AG04450 (cell line): ENCODE measurements at regions of chr6 and their contacts with region 1.

Region 1: GRCh38 chr6:33585403-33586107 is 5.5 kb upstream of the BAK1 start:
- DNase-seq: no peak
- H3K4me3 ChIP-seq: peak overlapping the region; percentile 20; the same call in 1 of the 2 replicates
- H3K27ac ChIP-seq: no peak overlapping the region
- H3K27me3 ChIP-seq: no peaks in the 10 kb centered on the region
- CTCF ChIP-seq: peak; percentile 95

Region 2: DNA sequence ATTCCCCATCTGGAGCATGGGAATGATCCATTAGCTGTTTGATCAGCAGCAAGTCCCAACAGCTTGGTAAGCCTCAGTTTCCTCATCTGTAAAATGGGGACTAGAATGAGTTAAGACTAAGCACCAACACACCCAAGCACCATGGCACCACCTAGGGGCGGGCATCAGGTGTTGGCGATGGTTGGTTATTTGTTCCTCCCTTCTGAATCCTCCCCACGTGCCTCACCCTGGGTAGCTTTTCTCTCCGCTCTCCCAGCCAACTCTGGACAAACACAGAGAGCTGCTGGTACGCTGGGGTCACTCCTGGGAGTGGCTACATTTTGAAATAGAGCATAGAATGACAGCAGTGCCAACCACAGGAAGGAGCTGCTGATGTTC is 22.2 kb after region 1 on chr6:
- CTCF ChIA-PET with region 1: interaction called, 10 read pairs
- POLR2A ChIA-PET with region 1: no interaction called
- DNase-seq: no peak
- H3K4me3 ChIP-seq: no peak overlapping the region
- H3K27ac ChIP-seq: no peak overlapping the region
- H3K27me3 ChIP-seq: no peaks in the 10 kb centered on the region
- CTCF ChIP-seq: 0 out of 2 replicates have a peak, but pooled peaks have one; percentile 2

Region 3: GRCh38 chr6:33652002-33652401 is 66.4 kb after region 1 on chr6:
- CTCF ChIA-PET with region 1: interaction called, 13 read pairs
- POLR2A ChIA-PET with region 1: no interaction called
- DNase-seq: no peak
- H3K4me3 ChIP-seq: no peak overlapping the region
- H3K27ac ChIP-seq: no peak overlapping the region
- H3K27me3 ChIP-seq: no peaks in the 10 kb centered on the region
- CTCF ChIP-seq: no peak

Region 4: GRCh38 chr6:33700391-33701050 is 115.0 kb after region 1 on chr6:
- CTCF ChIA-PET with region 1: interaction called, 38 read pairs
- POLR2A ChIA-PET with region 1: no interaction called
- DNase-seq: peak; percentile 26
- H3K4me3 ChIP-seq: no peak overlapping the region
- H3K27ac ChIP-seq: no peak overlapping the region
- H3K27me3 ChIP-seq: no peaks in the 10 kb centered on the region
- CTCF ChIP-seq: peak; percentile 73

Region 5: GRCh38 chr6:33732826-33733708 is 147.5 kb after region 1 on chr6:
- CTCF ChIA-PET with region 1: no interaction called
- POLR2A ChIA-PET with region 1: no interaction called
- DNase-seq: no peak
- H3K4me3 ChIP-seq: no peak overlapping the region
- H3K27ac ChIP-seq: no peak overlapping the region
- H3K27me3 ChIP-seq: peaks cover 4% of the 10 kb centered on the region
- CTCF ChIP-seq: no peak

Region 6: DNA sequence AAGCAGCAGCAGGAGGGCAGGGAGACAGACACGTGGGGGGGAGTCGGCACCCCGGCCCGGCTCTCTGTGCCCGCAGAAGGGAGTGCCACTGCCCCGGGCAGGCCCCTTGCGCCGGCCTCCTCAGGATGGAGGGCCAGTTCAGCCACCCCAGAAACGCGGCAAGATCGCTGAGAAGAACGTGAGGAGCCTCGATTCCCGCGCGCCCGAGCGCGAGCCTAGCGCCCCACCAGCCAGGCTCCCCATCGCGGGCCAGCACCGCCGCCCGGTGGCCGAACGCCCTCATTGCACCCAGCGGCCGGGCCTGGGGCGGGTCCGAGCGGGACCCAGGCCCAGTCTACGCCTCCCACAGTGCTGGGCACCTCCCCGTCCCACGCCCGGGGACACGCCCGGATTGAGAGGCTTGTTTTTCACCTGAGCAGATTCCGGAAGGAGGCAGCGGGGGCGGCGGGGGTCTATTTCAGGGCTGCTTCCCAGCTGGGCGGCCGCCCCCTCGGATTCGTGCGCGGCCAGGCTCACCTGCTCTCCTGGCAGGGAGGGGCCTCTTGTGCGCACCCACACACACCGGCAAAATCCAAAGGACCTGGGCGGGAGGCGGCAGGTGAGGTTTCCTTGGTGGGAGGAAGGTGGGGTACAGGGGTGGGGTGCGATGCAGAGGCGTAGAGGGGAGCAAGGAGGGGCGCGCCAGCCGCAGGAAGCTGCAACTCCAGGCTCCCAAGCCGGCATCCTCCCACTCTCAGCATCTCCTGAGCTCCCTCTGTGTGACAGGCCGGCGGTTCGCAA is 569.3 kb after region 1 on chr6:
- CTCF ChIA-PET with region 1: interaction called, 12 read pairs
- POLR2A ChIA-PET with region 1: no interaction called
- DNase-seq: no peak
- H3K4me3 ChIP-seq: peak overlapping the region; percentile 42
- H3K27ac ChIP-seq: no peak overlapping the region
- H3K27me3 ChIP-seq: peaks cover 49% of the 10 kb centered on the region
- CTCF ChIP-seq: peak; percentile 89